Posterior vena cava (tissue), 2 donors: ENCODE measurements at regions of chr5 and their contacts with region 1.

Region 1: GRCh38 chr5:143648696-143649095 is 163.3 kb upstream of the HMHB1 start:
- DNase-seq: no peak

Region 2: DNA sequence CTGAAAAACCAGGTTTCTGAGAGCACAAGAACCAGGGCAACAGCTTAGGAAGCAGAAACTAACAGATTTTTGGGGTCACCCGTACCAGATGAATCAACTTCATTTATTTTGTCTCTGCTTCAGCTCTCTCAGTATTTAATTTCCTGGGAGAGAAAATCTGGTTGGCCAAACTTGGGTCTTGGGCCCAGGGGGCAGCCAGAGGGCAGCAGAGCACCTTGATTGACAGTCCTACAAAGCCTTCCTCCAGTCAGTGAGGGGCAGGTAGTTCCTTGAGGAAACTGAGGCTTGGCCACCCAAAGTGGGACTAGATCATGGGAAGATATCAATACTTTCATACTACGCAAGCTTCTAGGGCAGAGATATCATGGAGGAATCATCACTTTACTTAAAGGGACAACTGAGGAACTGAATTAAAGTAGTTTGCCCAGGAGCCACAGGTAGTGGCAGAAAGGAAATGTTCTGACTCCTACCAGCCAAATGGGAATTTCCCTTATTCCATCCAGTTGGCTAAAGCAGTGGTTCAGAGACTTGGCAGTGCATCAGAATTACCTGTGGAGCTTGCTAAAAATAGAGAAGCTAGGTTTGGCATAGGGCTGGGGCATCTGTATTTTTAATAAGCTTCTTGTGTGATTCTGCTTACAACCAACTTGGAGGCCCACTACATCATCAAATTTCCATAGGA is 900.0 kb before region 1 on chr5:
- intact Hi-C with region 1: loop called in 1 of 2 experiments (anchors 10 kb)
- DNase-seq: no peak